ENCODE measurements at regions of chr2 and their contacts with region 1.

Region 1: DNA sequence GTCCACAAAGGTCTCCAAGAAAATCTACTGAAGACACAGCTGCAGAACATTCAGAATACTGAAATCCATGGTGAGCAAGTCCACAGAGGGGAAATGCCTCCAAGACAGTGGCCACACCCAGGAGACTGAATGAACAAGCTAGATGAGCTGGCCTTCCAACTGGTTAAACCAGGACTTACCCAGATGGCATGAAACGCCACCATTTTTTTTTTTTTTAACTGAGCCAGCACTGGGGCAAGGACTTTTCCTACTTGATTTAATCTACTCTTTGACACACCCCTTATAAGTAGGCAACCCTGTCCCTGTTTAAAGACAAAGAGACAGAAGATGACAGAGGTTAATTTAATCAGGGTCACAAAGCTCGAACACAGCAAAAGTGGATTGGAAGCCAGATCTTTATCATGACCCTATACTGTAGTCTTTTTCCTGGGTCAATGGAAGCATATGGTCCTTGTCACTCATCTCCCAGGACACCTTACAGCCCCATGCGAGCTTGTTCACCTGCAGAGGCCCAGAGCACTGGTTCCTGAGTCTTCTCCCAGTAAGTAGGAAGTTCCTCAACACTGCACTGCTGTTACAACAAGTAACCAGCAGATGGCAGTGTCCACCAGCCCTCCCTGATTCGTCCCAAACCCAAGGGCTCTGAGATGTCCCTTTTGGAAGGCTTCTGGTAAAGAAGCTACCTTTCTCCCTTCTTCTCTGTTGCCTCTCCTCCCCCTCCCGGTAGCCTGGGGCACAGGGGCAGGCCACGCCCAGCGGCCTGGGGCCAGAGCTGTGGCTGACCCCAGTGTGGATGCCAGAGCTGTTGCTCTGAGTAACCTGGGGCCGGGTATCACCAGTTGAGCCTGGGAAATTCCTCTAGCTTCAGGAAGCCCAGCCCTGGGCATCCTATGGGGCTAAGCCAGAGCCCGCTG is 5.6 kb upstream of the GDF7 start:
- DNase-seq: peak; percentile 80
- H3K4me3 ChIP-seq: no peak overlapping the region
- H3K27ac ChIP-seq: no peak overlapping the region
- H3K4me1 ChIP-seq: peaks cover 16% of the 10 kb centered on the region
- H3K27me3 ChIP-seq: peaks cover 29% of the 10 kb centered on the region
- CTCF ChIP-seq: peak; percentile 98 to 99

Region 2: GRCh38 chr2:20781656-20782265 is 120.4 kb after region 1 on chr2:
- CTCF ChIA-PET with region 1: interaction called, 3 read pairs
- dilution Hi-C with region 1: no loop called
- in situ Hi-C with region 1: no loop called
- intact Hi-C with region 1: loop called (anchors 1 kb)
- DNase-seq: peak; percentile 28
- H3K4me3 ChIP-seq: no peak overlapping the region
- H3K27ac ChIP-seq: no peak overlapping the region
- H3K4me1 ChIP-seq: no peaks in the 10 kb centered on the region
- H3K27me3 ChIP-seq: no peaks in the 10 kb centered on the region
- CTCF ChIP-seq: peak; percentile 86 to 88

Region 3: GRCh38 chr2:21026479-21027282 is 365.4 kb after region 1 on chr2:
- CTCF ChIA-PET with region 1: no interaction called
- dilution Hi-C with region 1: no loop called
- in situ Hi-C with region 1: no loop called
- intact Hi-C with region 1: loop called (anchors 1 kb)
- DNase-seq: no peak
- H3K4me3 ChIP-seq: no peak overlapping the region
- H3K27ac ChIP-seq: no peak overlapping the region
- H3K4me1 ChIP-seq: no peaks in the 10 kb centered on the region
- H3K27me3 ChIP-seq: no peaks in the 10 kb centered on the region
- CTCF ChIP-seq: no peak

Region 4: GRCh38 chr2:21118302-21118920 is 457.1 kb after region 1 on chr2:
- CTCF ChIA-PET with region 1: no interaction called
- dilution Hi-C with region 1: no loop called
- in situ Hi-C with region 1: no loop called
- intact Hi-C with region 1: loop called (anchors 1 kb)
- DNase-seq: peak; percentile 11
- H3K4me3 ChIP-seq: no peak overlapping the region
- H3K27ac ChIP-seq: no peak overlapping the region
- H3K4me1 ChIP-seq: no peaks in the 10 kb centered on the region
- H3K27me3 ChIP-seq: no peaks in the 10 kb centered on the region
- CTCF ChIP-seq: peak; percentile 35 to 62

Measured in mammary epithelial cell (primary cell).